GM13976 (cell line): ENCODE measurements at regions of chr1 and their contacts with region 1.

Region 1: GRCh38 chr1:38026592-38027200 is 14.2 kb downstream of the UTP11 start:
- DNase-seq: peak; percentile 70
- CTCF ChIP-seq: peak; percentile 79

Region 2: DNA sequence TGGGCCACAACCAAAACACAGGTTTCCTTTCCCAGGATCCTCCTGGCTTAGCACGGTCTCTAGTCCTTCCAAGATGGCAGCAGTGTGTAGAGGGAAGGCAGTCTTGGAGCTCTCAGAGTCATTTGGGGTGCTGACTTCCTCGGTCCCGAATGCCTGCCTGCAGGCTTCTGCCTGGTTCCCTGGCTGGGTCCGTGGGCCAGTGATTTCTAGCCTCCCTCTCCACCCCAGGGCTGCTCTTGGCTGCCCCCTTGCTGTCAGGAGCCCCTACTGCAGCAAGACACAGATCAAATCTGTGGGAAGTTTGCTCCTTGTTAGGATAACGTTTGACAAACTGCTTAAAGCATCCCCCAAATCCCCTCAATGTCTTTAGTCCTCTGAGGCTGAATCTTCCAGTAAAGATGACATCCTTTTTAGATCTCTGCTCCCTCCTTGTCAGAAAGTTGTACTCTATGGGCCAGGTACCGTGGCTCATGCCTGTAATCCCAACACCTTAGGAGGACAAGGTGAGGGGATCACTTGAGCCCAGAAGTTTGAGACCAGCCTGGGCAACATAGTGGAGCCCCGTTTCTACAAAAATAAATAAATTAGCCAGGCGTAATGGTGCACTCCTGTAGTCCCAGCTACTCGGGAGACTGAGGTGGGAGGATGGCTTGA is 560.4 kb after region 1 on chr1:
- in situ Hi-C with region 1: loop called (anchors 10 kb)
- DNase-seq: peak; percentile 84
- CTCF ChIP-seq: peak; percentile 95

Region 3: DNA sequence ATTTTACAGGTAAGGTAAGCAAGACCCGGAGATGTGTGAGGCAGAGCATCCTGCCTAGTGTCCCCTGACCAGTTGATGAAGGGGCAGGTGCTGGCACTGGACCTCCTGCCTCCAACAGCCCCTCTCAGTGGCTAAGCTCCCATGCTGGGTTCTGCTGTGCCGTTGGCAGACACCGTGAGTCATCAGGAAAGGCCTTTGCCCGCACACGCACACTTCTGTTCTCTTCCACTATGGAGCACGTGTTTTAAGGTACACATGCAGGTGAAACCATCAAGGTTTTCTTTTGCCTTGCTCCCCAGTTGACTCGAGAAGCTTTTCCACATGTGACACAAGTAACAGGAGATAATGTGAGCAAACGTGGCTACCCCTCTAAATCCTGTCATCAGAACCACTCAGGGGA is 625.0 kb after region 1 on chr1:
- in situ Hi-C with region 1: no loop called
- DNase-seq: no peak
- CTCF ChIP-seq: no peak

Region 4: GRCh38 chr1:38964140-38964548 is 937.4 kb after region 1 on chr1:
- in situ Hi-C with region 1: no loop called
- DNase-seq: peak; percentile 40
- CTCF ChIP-seq: peak; percentile 34